ENCODE measurements at regions of chr13 and their contacts with region 1.

Region 1: DNA sequence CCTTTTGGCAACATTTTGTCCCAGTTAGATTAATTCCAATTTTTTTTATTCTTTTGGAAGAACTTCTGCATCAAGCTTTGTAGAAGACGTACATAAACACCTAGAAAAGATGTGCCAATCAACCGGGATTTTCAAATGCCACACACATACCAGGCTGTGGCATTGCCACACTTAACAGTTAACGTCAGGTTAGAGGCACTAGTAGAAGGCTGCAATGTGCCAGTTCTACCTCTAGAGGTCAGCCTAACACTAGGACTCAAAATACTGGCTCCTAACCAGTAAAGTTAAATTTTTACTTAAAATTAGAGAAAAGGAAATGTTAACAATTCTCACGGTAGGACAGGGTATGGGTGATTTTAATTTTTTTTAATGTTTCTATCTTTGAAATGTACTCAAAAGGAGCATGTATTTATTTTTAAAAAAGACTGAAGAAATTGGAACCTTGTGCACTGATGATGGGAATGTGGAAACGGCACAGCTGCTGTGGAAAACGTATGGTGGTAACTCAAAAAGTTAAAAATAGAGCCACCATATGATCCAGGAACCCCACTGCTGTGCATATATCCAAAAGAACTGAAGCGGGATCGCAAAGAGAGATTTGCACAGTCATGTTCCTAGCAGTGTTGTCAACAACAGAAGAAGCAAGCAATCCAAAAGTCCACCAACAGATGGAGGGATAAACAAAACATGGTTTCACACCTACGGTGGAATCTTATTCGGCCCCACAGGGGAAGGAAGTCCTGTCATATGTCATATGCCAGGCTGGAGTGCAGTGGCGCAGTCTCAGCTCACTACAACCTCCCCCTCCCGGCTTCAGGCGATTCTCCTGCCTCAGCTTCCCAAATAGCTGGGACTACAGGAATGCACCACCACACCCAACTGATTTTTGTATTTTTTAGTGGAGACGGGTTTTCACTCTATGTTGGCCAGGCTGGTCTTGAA is 30.3 kb downstream of the CRYL1 start:
- DNase-seq: peak; percentile 79
- ATAC-seq: peak; percentile 76
- H3K4me3 Mint-ChIP-seq: no peak overlapping the region
- H3K27ac Mint-ChIP-seq: no peak overlapping the region
- H3K4me1 Mint-ChIP-seq: peaks cover 11% of the 10 kb centered on the region
- H3K27me3 Mint-ChIP-seq: no peaks in the 10 kb centered on the region

Region 2: GRCh38 chr13:20197361-20197834 is 298.0 kb before region 1 on chr13:
- CTCF ChIA-PET with region 1: interaction called, 17 read pairs
- POLR2A ChIA-PET with region 1: no interaction called
- DNase-seq: peak; percentile 38
- ATAC-seq: peak; percentile 47
- H3K4me3 Mint-ChIP-seq: no peak overlapping the region
- H3K27ac Mint-ChIP-seq: no peak overlapping the region
- H3K4me1 Mint-ChIP-seq: peaks cover 17% of the 10 kb centered on the region
- H3K27me3 Mint-ChIP-seq: peaks cover 41% of the 10 kb centered on the region

Region 3: DNA sequence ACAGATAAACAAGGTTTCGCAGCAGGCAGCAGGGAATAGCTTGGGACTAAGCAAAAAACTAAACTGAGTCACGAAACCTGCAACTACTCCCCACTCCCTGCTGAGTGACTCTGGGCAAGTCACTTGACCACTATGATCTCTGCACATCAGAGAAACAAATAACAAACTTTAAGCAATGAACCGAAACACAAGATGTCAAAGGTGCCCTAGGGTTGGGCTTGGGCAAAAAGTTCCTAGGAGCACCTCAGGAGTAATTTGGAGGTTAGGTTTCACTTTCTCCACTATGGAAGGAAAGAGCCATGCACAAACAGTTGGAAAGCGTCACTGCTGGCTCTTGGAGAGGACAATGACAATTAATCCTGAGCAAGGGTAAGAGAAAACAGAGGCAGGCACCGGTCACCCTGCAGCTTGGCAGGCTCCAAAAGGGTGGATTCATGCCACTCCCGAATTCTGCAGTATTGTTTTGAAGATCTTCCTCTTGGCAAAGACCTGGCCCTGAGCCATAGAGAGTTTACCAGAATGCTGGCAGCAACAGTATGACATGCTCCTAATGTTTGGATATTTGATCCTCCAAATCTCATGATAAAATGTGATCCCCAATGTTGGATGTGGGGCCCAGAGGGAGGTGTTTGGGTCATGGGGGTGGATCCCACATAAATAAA is 30.0 kb before region 1 on chr13:
- CTCF ChIA-PET with region 1: no interaction called
- POLR2A ChIA-PET with region 1: no interaction called
- DNase-seq: no peak
- ATAC-seq: no peak
- H3K4me3 Mint-ChIP-seq: no peak overlapping the region
- H3K27ac Mint-ChIP-seq: no peak overlapping the region
- H3K4me1 Mint-ChIP-seq: peaks cover 16% of the 10 kb centered on the region
- H3K27me3 Mint-ChIP-seq: no peaks in the 10 kb centered on the region

Region 4: DNA sequence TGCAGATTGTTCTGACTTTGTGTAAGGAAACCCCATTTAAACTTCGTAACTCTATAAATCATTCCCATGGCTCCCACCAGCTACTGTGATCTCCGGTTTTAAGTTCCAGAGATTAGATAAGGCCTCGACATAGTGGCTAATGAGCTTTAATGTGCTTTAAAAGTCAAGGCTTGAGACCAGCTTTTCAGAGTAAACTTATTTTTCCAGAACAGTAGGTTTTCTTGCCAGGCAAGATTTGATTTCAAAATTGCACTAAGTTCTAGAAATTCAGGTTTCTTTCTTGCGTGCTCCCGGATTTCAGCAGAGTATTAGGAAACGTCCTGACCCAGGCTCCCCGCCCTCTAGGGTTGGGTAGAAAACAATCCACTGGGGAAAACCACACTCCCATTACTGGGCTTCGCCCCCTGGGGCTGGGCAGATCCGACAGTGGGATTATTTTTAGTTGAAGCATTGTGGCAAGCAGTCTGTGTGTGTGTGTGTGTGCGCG is 13.0 kb before region 1 on chr13:
- CTCF ChIA-PET with region 1: interaction called, 28 read pairs
- POLR2A ChIA-PET with region 1: no interaction called
- DNase-seq: no peak
- ATAC-seq: no peak
- H3K4me3 Mint-ChIP-seq: no peak overlapping the region
- H3K27ac Mint-ChIP-seq: no peak overlapping the region
- H3K4me1 Mint-ChIP-seq: peaks cover 4% of the 10 kb centered on the region
- H3K27me3 Mint-ChIP-seq: no peaks in the 10 kb centered on the region

Region 5: GRCh38 chr13:20924758-20925394 is 429.5 kb after region 1 on chr13:
- CTCF ChIA-PET with region 1: interaction called, 21 read pairs
- POLR2A ChIA-PET with region 1: no interaction called
- DNase-seq: peak; percentile 85
- ATAC-seq: peak; percentile 77
- H3K4me3 Mint-ChIP-seq: no peak overlapping the region
- H3K27ac Mint-ChIP-seq: no peak overlapping the region
- H3K4me1 Mint-ChIP-seq: no peaks in the 10 kb centered on the region
- H3K27me3 Mint-ChIP-seq: peaks cover 3% of the 10 kb centered on the region